ENCODE measurements at regions of chr5 and their contacts with region 1.

Region 1: GRCh38 chr5:95110118-95110517 is 174.8 kb downstream of the MCTP1 start:
- DNase-seq: no peak
- ATAC-seq: peak; percentile 78
- H3K4me3 ChIP-seq: no peak overlapping the region
- H3K27ac ChIP-seq: no peak overlapping the region
- H3K4me1 ChIP-seq: no peaks in the 10 kb centered on the region
- H3K27me3 ChIP-seq: no peaks in the 10 kb centered on the region
- CTCF ChIP-seq: peak in 1 of 3 experiments; percentile 18; a peak in 2 of 6 replicates
- EP300 ChIP-seq: no peak
- POLR2A ChIP-seq: no peak
- RAD21 ChIP-seq: no peak

Region 2: GRCh38 chr5:95069948-95070347 is 40.2 kb before region 1 on chr5:
- CTCF ChIA-PET with region 1: no interaction called
- POLR2A ChIA-PET with region 1: no interaction called
- RAD21 ChIA-PET with region 1: no interaction called
- SMC1A ChIA-PET with region 1: no interaction called
- in situ Hi-C with region 1: no loop called
- intact Hi-C with region 1: no loop called
- DNase-seq: no peak
- ATAC-seq: peak; percentile 42
- H3K4me3 ChIP-seq: no peak overlapping the region; the same call in 1 of the 2 replicates
- H3K27ac ChIP-seq: peak overlapping the region; percentile 30; the same call in 1 of the 2 replicates
- H3K4me1 ChIP-seq: peaks cover 44% of the 10 kb centered on the region
- H3K27me3 ChIP-seq: no peaks in the 10 kb centered on the region
- CTCF ChIP-seq: no peak
- EP300 ChIP-seq: no peak
- POLR2A ChIP-seq: no peak
- RAD21 ChIP-seq: no peak

Region 3: DNA sequence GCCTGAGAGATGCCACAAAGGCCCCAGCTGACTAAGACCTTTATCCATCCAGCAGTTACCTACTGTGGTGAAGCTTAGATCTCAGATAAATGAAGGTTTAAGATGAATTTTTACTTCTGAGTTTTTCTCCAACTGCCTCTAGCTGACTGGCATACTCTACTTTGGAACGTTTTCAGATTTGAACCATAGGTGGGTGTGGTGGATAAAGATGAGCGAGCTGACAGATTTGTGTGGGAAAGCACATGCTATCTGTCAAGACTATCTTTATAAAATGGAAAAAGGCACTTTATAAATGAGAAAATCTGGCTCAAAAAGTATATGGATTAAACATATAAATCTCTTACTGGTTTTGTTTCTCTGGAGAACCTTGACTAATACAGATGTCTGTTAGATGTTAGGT is 14.0 kb after region 1 on chr5:
- CTCF ChIA-PET with region 1: interaction called, 3 read pairs
- POLR2A ChIA-PET with region 1: no interaction called
- RAD21 ChIA-PET with region 1: no interaction called
- SMC1A ChIA-PET with region 1: interaction called, 14 read pairs
- in situ Hi-C with region 1: no loop called
- intact Hi-C with region 1: no loop called
- DNase-seq: no peak
- ATAC-seq: no peak
- H3K4me3 ChIP-seq: no peak overlapping the region
- H3K27ac ChIP-seq: no peak overlapping the region
- H3K4me1 ChIP-seq: no peaks in the 10 kb centered on the region
- H3K27me3 ChIP-seq: no peaks in the 10 kb centered on the region
- CTCF ChIP-seq: no peak
- EP300 ChIP-seq: no peak
- POLR2A ChIP-seq: no peak
- RAD21 ChIP-seq: no peak

Region 4: GRCh38 chr5:95870105-95870672 is 760.1 kb after region 1 on chr5:
- CTCF ChIA-PET with region 1: no interaction called
- POLR2A ChIA-PET with region 1: no interaction called
- RAD21 ChIA-PET with region 1: no interaction called
- SMC1A ChIA-PET with region 1: no interaction called
- in situ Hi-C with region 1: no loop called
- intact Hi-C with region 1: no loop called
- DNase-seq: peak; percentile 65
- ATAC-seq: peak; percentile 84
- H3K4me3 ChIP-seq: peak overlapping the region; percentile 54; the same call in 1 of the 2 replicates
- H3K27ac ChIP-seq: peak overlapping the region; percentile 82
- H3K4me1 ChIP-seq: peaks cover 24% of the 10 kb centered on the region
- H3K27me3 ChIP-seq: no peaks in the 10 kb centered on the region
- CTCF ChIP-seq: no peak
- EP300 ChIP-seq: no peak; a peak in 1 of 4 replicates
- POLR2A ChIP-seq: 0 out of 2 replicates have a peak, but pooled peaks have one; percentile 32
- RAD21 ChIP-seq: no peak